Activated CD4-positive, alpha-beta T cell treated with anti-CD3 and anti-CD28 coated beads, Interleukin-2, amount 10 ng/mL, durations not matched to agents 24 days and 14 days (primary cell): ENCODE measurements at regions of chr12 and their contacts with region 1.

Region 1: DNA sequence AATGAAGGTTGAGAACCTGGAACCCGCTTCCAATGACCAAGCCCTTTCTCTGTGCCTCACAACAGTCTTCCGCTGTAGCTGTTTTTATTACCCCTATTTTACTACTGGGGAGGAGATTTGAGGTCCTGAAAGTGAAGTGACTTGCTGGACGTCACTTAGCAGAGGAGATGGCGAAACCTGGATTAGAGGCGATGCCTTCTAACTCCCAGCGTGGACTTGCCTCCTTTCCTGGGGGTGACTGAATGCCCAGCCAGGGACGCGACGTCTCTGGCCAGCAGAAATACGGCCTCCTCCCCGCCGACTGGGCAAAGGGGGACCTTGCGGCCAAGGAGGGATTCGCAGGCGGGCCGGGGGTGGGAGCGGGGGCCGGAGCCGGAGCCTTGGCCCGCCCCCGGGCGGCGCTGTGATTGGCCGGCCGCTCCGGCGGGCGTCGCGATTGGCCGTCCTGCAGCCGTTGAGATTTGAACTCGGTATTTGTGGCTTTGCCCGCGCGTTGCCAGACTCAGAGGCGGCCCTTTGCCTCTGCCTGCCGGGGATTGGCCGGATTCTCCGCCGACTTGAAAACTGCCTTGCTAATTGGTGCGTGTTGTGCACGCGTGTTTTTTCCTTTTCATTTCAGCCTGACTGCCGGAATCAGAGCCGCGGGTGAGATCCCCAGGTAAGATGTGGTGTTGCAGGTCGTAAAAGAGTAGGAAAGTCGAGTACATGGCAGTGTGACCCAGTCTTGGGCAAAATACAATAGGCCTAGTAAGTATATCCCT is at the start of gene NCAPD2:
- DNase-seq: peak; percentile 99
- H3K4me3 Mint-ChIP-seq: peak within 1 kb of the TSS; percentile 95
- H3K27ac Mint-ChIP-seq: peak within 1 kb of the TSS; percentile 98
- H3K4me1 Mint-ChIP-seq: peaks cover 34% of the 10 kb centered on the region
- H3K27me3 Mint-ChIP-seq: no peaks in the 10 kb centered on the region
- total RNA-seq, gene NCAPD2: 104 and 106 TPM in 2 replicates

Region 2: DNA sequence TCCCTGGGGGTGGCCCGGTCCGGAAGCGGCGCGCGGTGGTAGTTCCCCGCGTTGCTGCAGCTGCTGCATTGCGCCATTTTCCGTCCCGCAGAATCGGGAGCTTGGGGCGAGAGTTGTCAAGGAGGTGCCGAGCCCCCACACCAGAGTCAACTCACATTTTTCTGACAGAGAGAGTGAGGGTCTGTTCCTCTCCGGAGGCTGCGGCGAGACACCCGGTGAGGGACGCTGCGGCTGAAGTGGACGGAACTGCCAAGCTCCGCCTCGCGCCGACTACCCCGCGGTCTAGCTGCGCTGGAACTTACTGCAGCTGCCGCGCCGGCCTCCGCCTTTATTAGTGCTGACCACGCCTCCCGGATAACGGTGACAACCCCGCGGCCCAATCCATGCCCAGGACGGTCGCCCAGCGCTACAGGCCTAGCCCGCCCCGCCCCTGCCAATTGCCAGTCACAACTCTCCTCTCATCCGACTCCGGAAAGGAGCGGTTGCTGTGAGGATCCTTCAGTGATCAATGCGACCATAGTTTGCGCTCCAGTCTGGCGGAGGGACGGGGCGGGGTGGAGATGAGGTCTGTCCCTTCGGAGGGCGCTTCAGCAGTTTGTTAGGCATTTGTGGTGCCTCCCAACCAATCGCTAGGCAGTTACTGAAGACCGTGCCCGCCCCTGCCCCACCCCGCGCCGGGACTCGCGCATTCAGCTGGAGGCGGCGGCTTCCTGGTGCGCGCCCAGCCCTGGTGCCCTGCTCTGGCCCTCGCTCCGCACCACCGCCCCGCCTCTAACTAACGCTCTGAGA is 23.1 kb before region 1 on chr12 and contains the start of gene VAMP1:
- intact Hi-C with region 1: loop called (anchors 1 kb)
- DNase-seq: peak; percentile 99
- H3K4me3 Mint-ChIP-seq: peak within 1 kb of the TSS; percentile 94
- H3K27ac Mint-ChIP-seq: peak within 1 kb of the TSS; percentile 91
- H3K4me1 Mint-ChIP-seq: peaks cover 52% of the 10 kb centered on the region
- H3K27me3 Mint-ChIP-seq: peaks cover 1% of the 10 kb centered on the region
- total RNA-seq, gene VAMP1: 50.0 and 51.2 TPM in 2 replicates